ENCODE measurements at regions of chr1 and their contacts with region 1.

Region 1: DNA sequence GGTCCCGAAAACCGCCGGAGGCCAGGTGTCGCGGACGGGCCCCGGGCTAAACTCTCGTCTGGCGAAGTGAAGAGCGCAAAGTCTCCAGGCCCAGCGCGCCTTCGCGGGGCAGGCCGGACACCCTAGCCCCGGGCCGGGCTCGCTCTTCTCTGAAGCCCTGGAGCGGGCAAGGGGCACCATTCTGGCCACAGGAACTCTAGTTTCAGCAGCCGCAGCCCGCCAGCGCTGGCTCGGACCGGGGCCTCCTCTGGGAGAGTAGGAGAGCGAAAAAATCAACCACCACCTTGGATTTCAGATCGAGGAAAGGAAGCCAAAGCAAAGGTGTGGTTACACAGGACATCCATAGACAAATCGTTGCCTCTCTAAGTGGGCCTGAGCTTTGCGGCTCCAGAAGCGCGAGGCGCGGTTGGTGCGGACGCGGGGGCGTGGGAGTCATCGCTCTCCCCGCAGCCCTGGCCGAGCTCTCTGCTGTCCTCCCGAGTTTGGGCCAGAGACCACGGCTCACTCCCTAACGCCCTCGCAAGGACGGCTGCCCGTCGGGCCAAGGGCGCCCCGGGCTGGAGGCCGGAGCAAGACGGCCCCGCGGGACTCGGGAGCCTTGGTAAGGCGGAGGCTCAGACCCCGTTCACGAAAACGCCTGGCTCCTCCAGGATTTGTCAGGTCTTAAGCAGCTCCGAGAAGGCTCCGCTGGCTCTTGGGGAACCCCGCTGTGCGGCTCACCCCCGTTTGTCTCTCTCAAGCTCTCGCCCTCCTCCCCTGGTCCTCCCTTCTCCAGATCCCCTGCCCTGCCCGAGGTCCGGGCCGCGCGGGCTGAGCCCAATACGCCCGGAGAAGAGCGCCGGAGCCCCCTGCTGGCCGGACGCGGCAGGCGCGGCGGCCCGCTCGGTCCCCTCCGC is 132.9 kb upstream of the DPYD start:
- DNase-seq: peak in 13 of 14 experiments; percentile 23 to 76 (median 46)
- ATAC-seq: peak; percentile 88
- H3K4me3 ChIP-seq: peak overlapping the region; percentile 47
- H3K4me3 Mint-ChIP-seq: peak overlapping the region; percentile 67
- H3K27ac ChIP-seq: no peak overlapping the region
- H3K27ac Mint-ChIP-seq: no peak overlapping the region
- H3K4me1 ChIP-seq: peaks cover 22% of the 10 kb centered on the region
- H3K4me1 Mint-ChIP-seq: peaks cover 31% of the 10 kb centered on the region
- H3K27me3 ChIP-seq: peaks cover 38 to 72% of the 10 kb centered on the region in 2 experiments
- H3K27me3 Mint-ChIP-seq: peaks cover 95% of the 10 kb centered on the region
- CTCF ChIP-seq: peak; percentile 85

Region 2: GRCh38 chr1:96236156-96236739 is 1817.5 kb before region 1 on chr1:
- CTCF ChIA-PET with region 1: no interaction called
- POLR2A ChIA-PET with region 1: no interaction called
- intact Hi-C with region 1: loop called in 1 of 2 experiments (anchors 2 kb)
- DNase-seq: peak in 3 of 14 experiments; percentile 3 to 11 (median 9)
- ATAC-seq: no peak
- H3K4me3 ChIP-seq: no peak overlapping the region
- H3K4me3 Mint-ChIP-seq: no peak overlapping the region
- H3K27ac ChIP-seq: no peak overlapping the region
- H3K27ac Mint-ChIP-seq: no peak overlapping the region
- H3K4me1 ChIP-seq: no peaks in the 10 kb centered on the region
- H3K4me1 Mint-ChIP-seq: no peaks in the 10 kb centered on the region
- H3K27me3 ChIP-seq: no peaks in the 10 kb centered on the region
- H3K27me3 Mint-ChIP-seq: no peaks in the 10 kb centered on the region
- CTCF ChIP-seq: no peak

Region 3: DNA sequence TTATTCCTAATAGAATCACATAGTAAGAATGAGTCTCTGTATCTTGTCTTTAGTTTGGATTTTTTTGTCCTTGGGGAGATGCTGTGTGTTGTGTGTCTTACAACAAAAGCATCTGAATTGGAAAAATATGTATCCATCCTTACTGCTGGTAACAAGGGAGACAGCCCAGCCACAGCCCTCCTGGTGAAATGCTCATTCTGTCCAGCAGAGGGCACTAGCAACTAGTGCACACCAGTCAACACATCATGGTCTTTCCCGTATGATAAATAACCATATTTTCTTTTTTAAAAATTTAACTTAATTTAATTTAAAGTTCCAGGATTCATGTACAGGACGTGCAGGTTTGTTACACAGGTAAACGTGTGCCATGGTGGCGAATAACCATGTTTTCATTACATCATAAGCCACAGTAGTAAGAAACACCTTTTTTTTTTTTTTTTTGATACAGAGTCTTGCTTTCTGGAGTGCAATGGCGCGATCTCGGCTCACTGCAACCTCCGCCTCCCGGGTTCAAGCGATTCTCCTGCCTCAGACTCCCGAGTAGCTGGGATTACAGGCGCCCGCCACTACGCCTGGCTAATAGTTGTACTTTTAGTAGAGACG is 1087.1 kb before region 1 on chr1:
- CTCF ChIA-PET with region 1: interaction called, 3 read pairs
- POLR2A ChIA-PET with region 1: interaction called, 3 read pairs
- intact Hi-C with region 1: loop called (anchors 1 kb)
- DNase-seq: peak; percentile 53 to 80 (median 66)
- ATAC-seq: peak; percentile 62
- H3K4me3 ChIP-seq: no peak overlapping the region
- H3K4me3 Mint-ChIP-seq: no peak overlapping the region
- H3K27ac ChIP-seq: no peak overlapping the region
- H3K27ac Mint-ChIP-seq: no peak overlapping the region
- H3K4me1 ChIP-seq: no peaks in the 10 kb centered on the region
- H3K4me1 Mint-ChIP-seq: no peaks in the 10 kb centered on the region
- H3K27me3 ChIP-seq: peaks cover 3 to 5% of the 10 kb centered on the region in 2 experiments
- H3K27me3 Mint-ChIP-seq: peaks cover 57% of the 10 kb centered on the region
- CTCF ChIP-seq: peak; percentile 95

Region 4: DNA sequence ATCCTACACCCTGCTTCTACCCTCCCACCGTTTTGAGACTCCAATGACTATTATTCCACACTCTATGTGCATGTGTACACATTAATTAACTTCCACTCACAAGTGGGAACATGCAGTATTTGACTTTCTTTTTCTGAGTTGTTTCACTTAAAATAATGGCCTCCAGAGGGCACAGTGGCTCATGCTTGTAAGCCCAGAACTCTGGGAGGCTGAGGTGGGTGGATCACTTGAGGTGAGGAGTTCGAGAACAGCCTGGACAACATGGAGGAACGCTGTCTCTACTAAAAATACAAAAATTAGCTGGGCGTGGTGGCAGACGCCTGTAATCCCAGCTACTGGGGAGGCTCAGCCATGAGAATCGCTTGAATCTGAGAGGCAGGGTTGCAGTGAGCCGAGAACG is 867.3 kb before region 1 on chr1:
- CTCF ChIA-PET with region 1: no interaction called
- POLR2A ChIA-PET with region 1: no interaction called
- intact Hi-C with region 1: loop called (anchors 5 to 10 kb)
- DNase-seq: peak in 3 of 14 experiments; percentile 7 to 15 (median 14)
- ATAC-seq: no peak
- H3K4me3 ChIP-seq: no peak overlapping the region
- H3K4me3 Mint-ChIP-seq: no peak overlapping the region
- H3K27ac ChIP-seq: no peak overlapping the region
- H3K27ac Mint-ChIP-seq: no peak overlapping the region
- H3K4me1 ChIP-seq: no peaks in the 10 kb centered on the region
- H3K4me1 Mint-ChIP-seq: no peaks in the 10 kb centered on the region
- H3K27me3 ChIP-seq: no peaks in the 10 kb centered on the region
- H3K27me3 Mint-ChIP-seq: no peaks in the 10 kb centered on the region
- CTCF ChIP-seq: no peak

Region 5: DNA sequence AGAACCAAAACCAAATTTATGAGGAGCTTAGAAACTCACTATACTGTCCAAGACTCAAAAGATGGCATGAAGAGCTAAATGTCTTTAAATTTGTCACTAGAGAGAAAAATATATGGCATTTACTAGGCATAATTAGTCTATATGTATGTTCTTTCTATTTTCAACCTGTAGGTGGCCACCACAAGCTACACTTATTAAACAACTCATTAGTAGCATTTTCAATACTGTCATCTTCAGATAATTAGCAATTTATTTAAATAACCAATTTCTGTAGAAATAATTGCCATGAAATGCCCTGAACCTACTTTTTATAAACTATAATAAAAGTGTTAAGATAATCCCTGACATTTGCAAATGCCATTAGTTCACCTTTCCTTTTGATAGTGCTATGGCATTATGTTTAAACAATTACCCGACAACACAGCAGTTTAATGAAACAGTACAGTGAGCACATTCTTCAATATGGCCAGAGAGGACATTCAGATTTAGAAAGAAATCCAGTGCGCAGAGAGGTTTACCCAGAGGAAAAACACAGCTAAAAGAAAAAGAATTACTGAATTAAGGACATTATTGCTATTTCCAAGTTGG is 809.7 kb before region 1 on chr1:
- CTCF ChIA-PET with region 1: no interaction called
- POLR2A ChIA-PET with region 1: no interaction called
- intact Hi-C with region 1: no loop called
- DNase-seq: peak in 2 of 14 experiments; percentile 1 to 14
- ATAC-seq: no peak
- H3K4me3 ChIP-seq: no peak overlapping the region
- H3K4me3 Mint-ChIP-seq: no peak overlapping the region
- H3K27ac ChIP-seq: no peak overlapping the region
- H3K27ac Mint-ChIP-seq: no peak overlapping the region
- H3K4me1 ChIP-seq: no peaks in the 10 kb centered on the region
- H3K4me1 Mint-ChIP-seq: no peaks in the 10 kb centered on the region
- H3K27me3 ChIP-seq: no peaks in the 10 kb centered on the region
- H3K27me3 Mint-ChIP-seq: no peaks in the 10 kb centered on the region
- CTCF ChIP-seq: peak; percentile 12

Region 6: DNA sequence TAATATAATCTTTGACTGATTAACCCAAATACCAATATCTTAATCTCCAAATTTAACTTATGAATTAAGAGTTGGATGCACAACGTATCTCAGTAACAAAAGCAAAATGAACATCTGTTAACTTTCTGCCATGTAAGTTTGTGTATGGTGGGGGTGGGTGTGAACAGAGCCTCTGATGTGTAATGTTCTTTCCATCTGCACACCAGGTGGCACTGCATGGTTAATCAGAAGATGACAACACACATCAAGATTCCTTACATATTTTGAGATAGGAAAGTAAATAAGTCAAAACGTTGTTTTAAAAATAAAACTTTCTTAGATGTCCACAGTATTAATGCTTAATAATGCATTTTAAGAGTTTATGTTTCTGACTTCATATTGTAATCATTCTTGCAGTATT is 384.8 kb before region 1 on chr1:
- CTCF ChIA-PET with region 1: interaction called, 3 read pairs
- POLR2A ChIA-PET with region 1: no interaction called
- intact Hi-C with region 1: loop called (anchors 2 to 5 kb)
- DNase-seq: peak in 4 of 14 experiments; percentile 10 to 25 (median 20)
- ATAC-seq: no peak
- H3K4me3 ChIP-seq: no peak overlapping the region
- H3K4me3 Mint-ChIP-seq: no peak overlapping the region
- H3K27ac ChIP-seq: no peak overlapping the region
- H3K27ac Mint-ChIP-seq: no peak overlapping the region
- H3K4me1 ChIP-seq: no peaks in the 10 kb centered on the region
- H3K4me1 Mint-ChIP-seq: no peaks in the 10 kb centered on the region
- H3K27me3 ChIP-seq: no peaks in the 10 kb centered on the region
- H3K27me3 Mint-ChIP-seq: no peaks in the 10 kb centered on the region
- CTCF ChIP-seq: peak; percentile 18

Region 7: DNA sequence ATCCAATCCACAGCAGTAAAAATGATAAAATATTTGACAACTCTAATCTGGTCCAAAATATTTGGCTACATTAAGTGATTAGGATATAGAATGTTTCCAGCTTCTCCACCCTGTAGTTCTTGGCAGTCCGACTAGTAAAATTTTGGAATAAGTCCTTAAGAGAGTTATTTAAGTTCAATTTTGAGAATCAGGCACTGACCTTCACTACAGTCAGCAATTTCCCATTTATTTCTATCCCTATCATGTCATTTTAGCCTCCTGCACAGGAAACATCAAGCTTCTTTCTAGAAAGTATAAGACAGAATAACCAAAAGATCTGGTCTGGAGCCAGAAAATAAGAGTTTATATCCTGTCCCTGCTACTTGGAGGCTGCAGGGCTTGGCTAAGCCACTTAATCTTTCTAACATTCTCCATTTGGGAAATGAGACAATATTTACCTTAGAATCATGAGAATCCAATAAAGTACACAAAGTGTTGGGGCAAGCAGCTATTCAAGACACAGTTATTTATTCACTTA is 295.1 kb before region 1 on chr1:
- CTCF ChIA-PET with region 1: no interaction called
- POLR2A ChIA-PET with region 1: no interaction called
- intact Hi-C with region 1: loop called in 1 of 2 experiments (anchors 1 kb)
- DNase-seq: no peak
- ATAC-seq: no peak
- H3K4me3 ChIP-seq: no peak overlapping the region
- H3K4me3 Mint-ChIP-seq: no peak overlapping the region
- H3K27ac ChIP-seq: no peak overlapping the region
- H3K27ac Mint-ChIP-seq: no peak overlapping the region
- H3K4me1 ChIP-seq: no peaks in the 10 kb centered on the region
- H3K4me1 Mint-ChIP-seq: no peaks in the 10 kb centered on the region
- H3K27me3 ChIP-seq: no peaks in the 10 kb centered on the region
- H3K27me3 Mint-ChIP-seq: no peaks in the 10 kb centered on the region
- CTCF ChIP-seq: no peak

Region 8: DNA sequence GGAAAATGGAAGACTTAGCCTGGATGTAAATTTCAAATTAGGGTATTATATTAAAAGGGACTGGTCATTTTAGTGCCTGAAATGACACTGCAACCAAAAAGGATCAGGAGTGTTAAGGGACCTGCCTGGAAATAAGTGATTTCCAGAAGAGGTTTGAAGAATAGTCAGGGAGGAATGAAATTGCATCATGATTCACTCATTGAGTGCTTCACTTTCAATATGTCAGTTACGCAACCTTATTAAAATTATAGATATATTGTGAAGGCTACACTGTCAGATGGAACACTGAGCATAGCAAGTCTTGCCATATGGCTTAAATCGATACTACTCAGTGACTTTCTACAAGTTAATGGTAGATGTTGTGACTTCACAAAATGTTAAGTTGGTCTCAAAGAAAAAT is 142.3 kb after region 1 on chr1:
- CTCF ChIA-PET with region 1: no interaction called
- POLR2A ChIA-PET with region 1: no interaction called
- intact Hi-C with region 1: no loop called
- DNase-seq: no peak
- ATAC-seq: no peak
- H3K4me3 ChIP-seq: no peak overlapping the region
- H3K4me3 Mint-ChIP-seq: no peak overlapping the region
- H3K27ac ChIP-seq: no peak overlapping the region
- H3K27ac Mint-ChIP-seq: no peak overlapping the region
- H3K4me1 ChIP-seq: no peaks in the 10 kb centered on the region
- H3K4me1 Mint-ChIP-seq: no peaks in the 10 kb centered on the region
- H3K27me3 ChIP-seq: no peaks in the 10 kb centered on the region
- H3K27me3 Mint-ChIP-seq: no peaks in the 10 kb centered on the region
- CTCF ChIP-seq: no peak

Measured in CD4-positive, alpha-beta T cell (primary cell).